ENCODE measurements at regions of chr5 and their contacts with region 1.

Region 1: DNA sequence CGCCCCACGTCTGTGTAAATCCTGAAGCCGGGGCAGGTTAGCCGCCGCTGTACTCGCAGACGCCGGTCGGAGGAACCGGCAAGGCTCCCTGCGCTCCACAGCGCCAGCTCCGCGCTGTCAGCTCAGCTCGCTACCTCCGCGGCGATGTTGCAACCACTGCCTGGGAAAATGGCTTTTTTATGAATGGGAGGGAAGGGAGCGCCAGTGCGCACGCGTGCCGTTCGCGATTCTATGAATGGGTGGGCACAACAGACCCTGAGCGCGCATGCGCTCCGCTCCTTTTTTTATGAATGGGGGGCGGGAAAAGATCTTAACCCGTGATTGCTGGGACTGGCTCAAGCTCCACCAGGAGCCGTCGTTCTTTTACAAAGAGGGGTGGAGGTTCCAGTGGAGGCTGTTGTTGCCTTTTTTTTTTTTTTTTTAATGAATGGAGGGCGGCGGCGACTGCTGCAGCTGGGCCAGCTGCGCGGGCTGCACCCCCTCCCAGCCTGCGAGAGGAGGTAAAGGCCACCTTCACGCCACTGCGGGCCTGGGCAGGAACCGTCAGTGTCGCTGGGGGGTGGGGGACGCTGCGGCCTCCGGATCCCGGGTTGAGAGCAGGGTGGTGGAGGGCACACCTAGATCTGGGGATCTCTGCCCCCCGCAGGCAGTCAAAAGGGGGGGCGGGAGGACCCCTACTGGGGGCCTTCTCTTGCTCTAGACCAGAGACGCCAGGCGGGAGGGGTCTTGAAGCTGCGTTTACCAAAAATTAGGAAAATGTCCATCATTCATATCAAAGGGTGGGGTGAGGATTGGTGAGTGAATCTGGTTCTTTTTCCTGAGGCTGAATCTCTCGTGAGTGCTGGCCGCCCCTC is at the start of gene SPRY4:
- DNase-seq: peak; percentile 98
- H3K4me3 ChIP-seq: peak within 1 kb of the TSS; percentile 78 to 99 (median 79)
- H3K27ac ChIP-seq: peak within 1 kb of the TSS; percentile 81
- H3K4me1 ChIP-seq: peaks cover 42% of the 10 kb centered on the region
- H3K27me3 ChIP-seq: no peaks in the 10 kb centered on the region
- CTCF ChIP-seq: peak in 1 of 2 donors; percentile 29
- total RNA-seq, gene SPRY4: 11.5 to 40.7 TPM

Region 2: GRCh38 chr5:142151436-142152383 is 173.4 kb before region 1 on chr5:
- CTCF ChIA-PET with region 1: no interaction called
- dilution Hi-C with region 1: no loop called
- in situ Hi-C with region 1: loop called in 1 of 2 experiments (anchors 25 kb)
- intact Hi-C with region 1: loop called (anchors 1 kb)
- DNase-seq: peak; percentile 37
- H3K4me3 ChIP-seq: no peak overlapping the region
- H3K27ac ChIP-seq: no peak overlapping the region
- H3K4me1 ChIP-seq: no peaks in the 10 kb centered on the region
- H3K27me3 ChIP-seq: no peaks in the 10 kb centered on the region
- CTCF ChIP-seq: peak; percentile 78 to 88

Region 3: DNA sequence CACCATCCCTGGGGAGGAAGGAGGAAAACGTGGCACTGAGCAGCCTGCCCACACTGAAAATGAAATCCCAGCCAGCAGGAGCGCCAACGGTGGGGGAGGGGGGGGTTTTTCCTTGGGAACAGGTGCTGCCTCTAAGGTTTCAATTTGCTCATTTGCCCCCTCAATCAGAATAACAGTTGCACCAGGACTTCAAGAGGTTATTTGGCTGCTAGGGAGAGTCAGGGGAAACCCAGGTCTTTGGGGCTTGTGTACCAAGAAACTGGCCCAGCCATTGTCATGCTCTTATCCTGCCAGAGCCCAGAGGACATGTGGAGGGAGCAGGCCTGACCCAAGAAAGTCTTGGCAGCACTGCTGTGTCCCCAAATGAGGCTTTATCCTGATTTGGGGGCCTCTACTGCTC is 150.1 kb before region 1 on chr5:
- CTCF ChIA-PET with region 1: no interaction called
- dilution Hi-C with region 1: no loop called
- in situ Hi-C with region 1: loop called in 1 of 2 experiments (anchors 25 kb)
- intact Hi-C with region 1: loop called (anchors 2 kb)
- DNase-seq: no peak
- H3K4me3 ChIP-seq: no peak overlapping the region
- H3K27ac ChIP-seq: no peak overlapping the region
- H3K4me1 ChIP-seq: peaks cover 17% of the 10 kb centered on the region
- H3K27me3 ChIP-seq: no peaks in the 10 kb centered on the region
- CTCF ChIP-seq: no peak

Region 4: DNA sequence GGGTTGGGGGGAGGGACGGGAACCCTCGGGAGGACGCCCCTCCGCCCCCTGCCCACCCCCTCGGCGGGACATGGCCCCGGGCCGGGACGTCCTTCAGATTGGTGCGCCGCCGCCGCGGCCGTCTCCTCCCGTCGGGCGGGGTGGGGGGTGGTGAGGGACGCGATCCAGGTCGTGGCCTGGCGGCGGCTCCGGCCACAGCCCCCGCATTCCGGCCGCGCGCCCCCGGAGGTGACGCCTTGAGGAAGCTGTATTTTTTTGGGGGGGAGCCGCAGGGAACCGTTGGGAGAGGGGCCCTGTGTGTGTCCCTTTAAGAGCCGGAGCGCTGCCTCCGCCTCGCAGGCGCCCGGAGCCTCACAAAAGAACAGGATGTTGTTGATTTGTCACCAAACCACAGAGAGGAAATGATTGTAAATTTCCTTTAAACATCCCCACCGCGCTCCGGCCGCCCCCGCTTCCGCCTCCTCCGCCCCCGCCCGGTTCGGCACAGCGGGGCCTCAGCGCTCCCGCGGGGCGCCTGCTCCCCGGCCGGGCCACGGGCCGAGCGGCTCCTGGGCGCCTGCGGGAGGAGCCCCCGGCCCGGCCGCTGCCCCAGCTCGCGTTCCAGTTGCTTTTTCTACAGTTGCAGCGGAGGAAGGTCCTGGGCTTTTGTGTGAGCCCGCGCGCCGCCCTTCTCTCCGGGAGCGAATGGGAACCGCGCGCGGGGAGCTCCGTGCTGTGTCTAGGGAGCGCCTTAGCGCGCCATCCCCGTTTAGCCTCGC is 31.8 kb after region 1 on chr5:
- CTCF ChIA-PET with region 1: interaction called, 3 read pairs
- dilution Hi-C with region 1: no loop called
- in situ Hi-C with region 1: no loop called
- intact Hi-C with region 1: loop called (anchors 1 kb)
- DNase-seq: peak; percentile 79
- H3K4me3 ChIP-seq: peak overlapping the region; percentile 52 to 69 (median 65)
- H3K27ac ChIP-seq: peak overlapping the region; percentile 59
- H3K4me1 ChIP-seq: peaks cover 20% of the 10 kb centered on the region
- H3K27me3 ChIP-seq: no peaks in the 10 kb centered on the region
- CTCF ChIP-seq: no peak

Region 5: DNA sequence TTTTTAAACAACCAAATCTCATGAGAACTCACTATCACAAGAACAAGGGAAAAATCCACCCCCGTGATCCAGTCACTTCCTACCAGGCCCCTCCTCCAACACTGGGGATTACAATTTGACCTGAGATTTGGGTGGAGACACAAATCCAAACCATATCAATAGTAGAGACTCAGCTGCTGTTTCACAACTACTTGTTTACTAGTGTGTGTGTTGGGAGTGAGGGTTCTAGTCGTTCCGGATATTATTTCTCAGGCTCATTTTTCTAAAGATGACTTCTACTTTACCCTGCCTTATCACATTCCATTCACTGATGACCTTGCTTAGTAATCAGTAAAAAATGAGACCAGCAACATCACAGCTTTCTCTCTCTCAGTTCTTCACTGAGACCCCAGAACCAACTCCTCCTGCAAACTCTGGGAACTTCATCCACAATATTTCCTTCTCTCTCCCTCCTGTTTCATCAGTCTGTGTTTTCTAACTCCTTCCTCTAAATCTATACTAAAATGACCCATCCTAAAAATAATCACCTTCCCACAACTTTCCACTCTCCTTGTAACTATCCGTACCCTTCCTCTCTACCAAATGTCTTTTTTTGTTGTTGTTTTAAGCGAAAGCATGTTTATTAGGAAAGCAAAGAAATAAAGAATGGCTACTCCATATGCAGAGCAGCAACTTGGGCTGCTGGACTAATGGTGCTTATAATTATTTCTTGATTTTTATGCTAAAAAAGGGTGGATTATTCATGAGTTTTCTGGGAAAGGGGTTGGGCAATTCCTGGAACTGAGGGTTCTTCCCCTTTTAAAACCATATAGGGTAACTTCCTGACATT is 121.2 kb after region 1 on chr5:
- CTCF ChIA-PET with region 1: no interaction called
- dilution Hi-C with region 1: no loop called
- in situ Hi-C with region 1: no loop called
- intact Hi-C with region 1: loop called (anchors 10 kb)
- DNase-seq: no peak
- H3K4me3 ChIP-seq: no peak overlapping the region
- H3K27ac ChIP-seq: no peak overlapping the region
- H3K4me1 ChIP-seq: peaks cover 12% of the 10 kb centered on the region
- H3K27me3 ChIP-seq: no peaks in the 10 kb centered on the region
- CTCF ChIP-seq: no peak

Region 6: DNA sequence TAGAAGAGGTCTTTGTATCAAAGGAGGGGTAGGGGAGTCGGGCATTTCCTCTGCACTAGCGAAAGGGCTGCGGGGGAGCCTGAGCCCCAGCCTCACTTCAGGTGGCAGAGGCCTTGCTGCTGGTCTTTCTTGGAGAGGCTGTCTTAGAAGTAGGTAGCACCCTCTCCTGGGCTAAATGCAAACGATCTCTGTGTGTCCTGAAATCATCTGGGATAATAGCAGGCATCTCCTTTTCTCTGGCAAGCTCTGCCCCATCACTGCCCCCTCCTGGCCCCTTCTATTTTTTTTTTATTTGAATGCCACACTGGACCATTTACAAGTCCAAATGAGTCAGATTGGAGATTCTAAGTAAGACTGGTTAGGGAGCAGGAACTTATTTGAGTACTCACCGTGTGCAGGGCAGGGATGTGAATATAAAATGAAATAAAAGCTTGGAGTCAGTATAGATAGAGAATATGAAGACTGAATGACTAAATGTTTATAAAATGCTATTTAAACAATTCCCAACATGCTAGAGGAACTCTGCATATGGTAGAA is 223.7 kb after region 1 on chr5:
- CTCF ChIA-PET with region 1: interaction called, 6 read pairs
- dilution Hi-C with region 1: no loop called
- in situ Hi-C with region 1: loop called in 1 of 2 experiments (anchors 10 kb)
- intact Hi-C with region 1: loop called (anchors 1 kb)
- DNase-seq: peak; percentile 87
- H3K4me3 ChIP-seq: no peak overlapping the region
- H3K27ac ChIP-seq: no peak overlapping the region
- H3K4me1 ChIP-seq: peaks cover 16% of the 10 kb centered on the region
- H3K27me3 ChIP-seq: no peaks in the 10 kb centered on the region
- CTCF ChIP-seq: peak; percentile 85 to 91

Measured in mammary epithelial cell (primary cell).